Ovary (tissue), 10 donors: ENCODE measurements at regions of chr2 and their contacts with region 1.

Region 1: GRCh38 chr2:176554101-176555048 is 285.1 kb downstream of the MTX2 start:
- DNase-seq: peak; percentile 34 to 67 (median 54)
- H3K4me3 ChIP-seq: peak overlapping the region; percentile 38
- H3K27ac ChIP-seq: peak overlapping the region; percentile 72 to 88
- H3K4me1 ChIP-seq: peaks cover 5% of the 10 kb centered on the region
- H3K27me3 ChIP-seq: no peaks in the 10 kb centered on the region
- CTCF ChIP-seq: peak; percentile 80 to 88 (median 88)
- EP300 ChIP-seq: no peak
- POLR2A ChIP-seq: no peak

Region 2: DNA sequence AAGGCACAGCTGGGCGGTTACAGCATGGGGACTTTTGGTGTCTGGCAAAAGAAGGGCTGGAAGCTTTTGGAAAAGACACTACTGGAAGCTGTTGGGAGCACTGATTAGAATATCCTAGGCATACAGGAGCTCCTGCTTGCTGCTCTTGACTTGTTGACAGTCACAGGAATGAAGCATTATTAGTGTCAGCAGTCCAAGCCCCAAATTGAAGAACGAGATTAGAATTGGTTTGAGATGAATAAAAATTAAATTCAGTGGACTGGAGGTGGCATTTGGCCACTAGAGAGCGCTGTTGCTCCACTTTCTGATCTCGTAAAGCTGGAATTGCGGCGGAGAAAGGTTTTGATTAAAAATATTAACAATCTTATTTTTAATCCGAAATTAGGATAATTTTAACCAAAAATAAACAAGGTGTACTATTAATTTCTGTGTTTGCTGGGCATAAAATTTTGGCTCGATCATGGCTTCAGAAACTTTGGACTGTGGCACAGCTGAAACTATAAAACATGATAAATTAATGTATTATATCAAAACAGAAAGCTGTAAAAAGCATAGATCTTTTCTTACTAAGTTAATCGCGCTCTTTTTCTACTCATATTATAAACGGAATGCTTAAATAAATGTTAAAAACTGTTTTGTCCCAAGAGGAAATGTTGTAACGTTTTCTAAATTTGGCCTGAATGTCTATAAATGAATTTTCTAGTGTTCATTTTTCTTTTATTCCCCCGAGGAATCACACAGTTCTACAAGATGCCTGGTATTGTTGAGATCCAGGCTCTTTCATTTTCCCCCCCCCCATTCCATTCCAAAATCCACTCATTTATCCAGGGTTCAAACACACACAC is 427.2 kb before region 1 on chr2:
- intact Hi-C with region 1: loop called in 2 of 4 experiments (anchors 5 kb)
- DNase-seq: peak; percentile 67 to 87 (median 82)
- H3K4me3 ChIP-seq: peak overlapping the region; percentile 10
- H3K27ac ChIP-seq: no peak overlapping the region
- H3K4me1 ChIP-seq: peaks cover 2% of the 10 kb centered on the region
- H3K27me3 ChIP-seq: no peaks in the 10 kb centered on the region
- CTCF ChIP-seq: peak; percentile 88 to 95 (median 90)
- EP300 ChIP-seq: no peak
- POLR2A ChIP-seq: no peak

Region 3: DNA sequence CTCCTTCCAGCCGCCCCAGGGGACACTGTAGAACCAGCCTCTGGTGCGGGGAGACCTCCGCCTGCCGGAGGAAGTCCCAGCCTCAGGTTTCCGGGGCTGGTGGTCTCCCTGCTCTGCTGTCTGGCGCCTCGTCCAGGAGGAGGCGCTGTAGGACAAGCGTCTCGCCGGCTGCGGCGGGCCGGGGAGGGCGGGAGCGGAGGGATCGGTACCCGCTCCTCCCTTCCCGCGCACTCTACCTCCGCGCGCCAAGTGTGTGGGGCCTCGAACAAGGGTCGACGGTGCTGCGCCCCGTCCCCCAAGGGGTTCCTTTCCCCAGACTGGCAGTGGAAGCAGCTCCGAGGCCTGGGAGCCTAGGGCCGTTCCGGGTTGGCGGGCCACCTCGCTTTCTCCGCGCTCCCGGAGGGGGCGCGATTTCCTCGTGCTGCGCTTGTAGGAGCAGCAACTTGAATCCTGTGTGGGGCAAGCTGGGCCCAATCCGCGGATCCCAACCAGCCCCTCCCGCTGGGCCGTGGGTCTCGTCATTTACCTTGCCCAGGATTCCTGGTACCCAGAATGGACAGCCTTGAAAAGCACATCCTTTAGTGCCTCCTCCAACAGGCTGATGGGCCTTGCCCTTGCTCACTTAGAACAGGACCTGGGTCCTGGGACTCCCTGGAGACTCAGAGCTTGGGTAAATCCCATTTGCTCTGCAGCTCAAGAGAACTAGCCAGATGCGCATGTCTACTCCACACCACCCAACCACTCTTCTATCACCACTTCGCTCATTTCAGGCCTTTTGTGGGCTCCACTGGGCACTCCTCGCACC is 413.7 kb before region 1 on chr2:
- intact Hi-C with region 1: loop called in 3 of 4 experiments (anchors 2 to 5 kb)
- DNase-seq: peak; percentile 84 to 90 (median 90)
- H3K4me3 ChIP-seq: peak overlapping the region; percentile 53
- H3K27ac ChIP-seq: peak overlapping the region; percentile 80 to 99
- H3K4me1 ChIP-seq: peaks cover 9% of the 10 kb centered on the region
- H3K27me3 ChIP-seq: no peaks in the 10 kb centered on the region
- CTCF ChIP-seq: peak; percentile 98 to 99 (median 98)
- EP300 ChIP-seq: no peak
- POLR2A ChIP-seq: no peak

Region 4: DNA sequence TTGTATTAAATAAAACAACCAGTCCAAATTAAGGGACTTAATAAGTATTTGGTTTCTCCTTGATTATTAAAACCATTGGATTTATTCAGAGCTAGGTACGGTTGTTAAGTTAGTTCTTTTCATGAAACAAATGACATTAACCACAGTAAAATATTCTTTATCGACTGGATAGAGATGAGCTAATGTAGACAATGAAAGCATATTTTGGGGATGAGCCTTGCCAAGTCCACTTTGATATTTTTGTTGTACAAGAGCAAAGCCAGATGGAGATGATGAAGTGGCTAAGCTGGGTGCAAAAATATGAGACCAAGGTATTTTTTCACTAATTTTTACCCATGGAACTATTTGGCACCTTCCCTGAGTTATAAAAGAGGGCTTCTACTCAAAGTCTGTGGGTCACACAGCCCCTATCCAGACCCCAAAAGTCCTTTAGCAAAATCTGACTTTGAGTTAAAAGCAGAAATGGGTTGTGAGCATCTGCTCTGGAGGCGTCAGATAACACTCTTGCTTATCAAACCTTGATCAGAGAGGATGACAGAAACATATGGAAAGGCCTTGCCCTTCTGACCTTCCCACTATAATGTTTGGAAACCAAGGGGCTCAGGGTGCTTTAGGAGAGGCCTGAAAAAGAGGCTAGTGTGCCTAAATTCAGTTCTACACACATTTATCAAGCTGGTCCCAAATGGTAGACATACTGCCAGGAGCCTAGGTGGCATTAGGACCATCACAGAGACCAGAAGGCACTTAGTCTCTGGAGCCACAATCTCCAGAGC is 171.7 kb after region 1 on chr2:
- intact Hi-C with region 1: no loop called
- DNase-seq: no peak
- H3K4me3 ChIP-seq: no peak overlapping the region
- H3K27ac ChIP-seq: no peak overlapping the region
- H3K4me1 ChIP-seq: peaks cover 7% of the 10 kb centered on the region
- H3K27me3 ChIP-seq: no peaks in the 10 kb centered on the region
- CTCF ChIP-seq: no peak
- EP300 ChIP-seq: no peak
- POLR2A ChIP-seq: no peak